Naive thymus-derived CD4-positive, alpha-beta T cell (primary cell): ENCODE measurements at regions of chr11 and their contacts with region 1.

Region 1: DNA sequence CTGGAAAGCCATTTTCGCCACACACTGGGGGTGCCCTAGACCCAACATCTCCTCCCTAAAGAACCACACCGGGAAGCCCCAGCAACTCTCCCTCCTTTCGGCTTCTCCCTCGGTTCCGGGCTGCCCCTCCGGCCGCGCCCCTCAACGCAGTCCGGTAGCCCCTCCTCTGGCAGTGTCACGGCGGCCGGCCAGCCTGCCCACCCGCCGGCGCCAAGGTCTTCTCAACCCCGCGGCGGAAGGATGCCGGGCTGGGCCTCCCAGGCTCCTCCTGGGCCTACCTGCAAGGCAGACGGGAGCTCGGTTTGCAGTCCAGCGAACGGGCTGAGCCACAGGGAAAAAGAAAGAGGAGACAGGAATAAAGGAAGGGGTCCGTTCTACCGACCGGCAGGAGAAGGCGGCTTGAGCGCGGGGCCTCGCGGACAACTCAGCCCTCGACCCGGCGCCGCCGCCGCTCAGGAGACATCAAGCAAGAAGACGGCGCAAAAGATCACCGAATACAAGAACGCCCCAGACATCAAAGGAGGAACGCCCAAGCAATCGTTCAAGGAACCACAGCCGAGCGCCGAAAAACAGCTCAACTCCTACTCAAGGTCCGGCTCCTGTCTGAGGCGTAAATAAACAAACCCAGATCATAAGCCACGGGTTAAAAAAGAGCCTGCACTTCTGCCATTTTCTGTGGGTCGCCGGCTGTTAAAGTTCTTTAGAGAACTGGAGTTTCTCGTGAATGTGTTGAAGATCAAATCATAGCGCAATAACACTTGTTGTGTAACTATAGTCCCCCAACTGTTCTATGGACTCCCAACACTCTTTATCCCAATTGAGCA is at the start of gene AMBRA1:
- DNase-seq: peak; percentile 59 to 83 (median 80)
- ATAC-seq: peak; percentile 97
- H3K4me3 ChIP-seq: peak within 1 kb of the TSS; percentile 69
- H3K4me3 Mint-ChIP-seq: peak within 1 kb of the TSS; percentile 90 to 100 (median 97)
- H3K27ac ChIP-seq: peak within 1 kb of the TSS; percentile 84
- H3K27ac Mint-ChIP-seq: peak within 1 kb of the TSS; percentile 92 to 98 (median 96)
- H3K4me1 ChIP-seq: peaks cover 19 to 22% of the 10 kb centered on the region in 2 donors
- H3K4me1 Mint-ChIP-seq: peaks cover 23 to 49% (median 41%) of the 10 kb centered on the region in 7 donors
- H3K27me3 ChIP-seq: no peaks in the 10 kb centered on the region
- H3K27me3 Mint-ChIP-seq: no peaks in the 10 kb centered on the region
- total RNA-seq, gene AMBRA1: 38.1 to 48.7 (median 44.6) TPM

Region 2: GRCh38 chr11:46450846-46451477 is 142.8 kb before region 1 on chr11:
- CTCF ChIA-PET with region 1: no interaction called
- POLR2A ChIA-PET with region 1: no interaction called
- intact Hi-C with region 1: no loop called
- DNase-seq: no peak
- ATAC-seq: no peak
- H3K4me3 ChIP-seq: no peak overlapping the region
- H3K4me3 Mint-ChIP-seq: no peak overlapping the region
- H3K27ac ChIP-seq: no peak overlapping the region
- H3K27ac Mint-ChIP-seq: peak overlapping the region in 1 of 9 donors; percentile 28
- H3K4me1 ChIP-seq: no peaks in the 10 kb centered on the region
- H3K4me1 Mint-ChIP-seq: peaks cover 4 to 66% (median 28%) of the 10 kb centered on the region in 7 donors
- H3K27me3 ChIP-seq: no peaks in the 10 kb centered on the region
- H3K27me3 Mint-ChIP-seq: no peaks in the 10 kb centered on the region

Region 3: GRCh38 chr11:46489661-46490560 is 103.9 kb before region 1 on chr11:
- CTCF ChIA-PET with region 1: no interaction called
- POLR2A ChIA-PET with region 1: no interaction called
- intact Hi-C with region 1: no loop called
- DNase-seq: peak in 7 of 9 donors; percentile 10 to 48 (median 27)
- ATAC-seq: peak; percentile 73
- H3K4me3 ChIP-seq: no peak overlapping the region
- H3K4me3 Mint-ChIP-seq: no peak overlapping the region
- H3K27ac ChIP-seq: no peak overlapping the region
- H3K27ac Mint-ChIP-seq: peak overlapping the region in 2 of 9 donors; percentile 32 to 66
- H3K4me1 ChIP-seq: no peaks in the 10 kb centered on the region
- H3K4me1 Mint-ChIP-seq: peaks cover 0 to 21% (median 8%) of the 10 kb centered on the region in 7 donors
- H3K27me3 ChIP-seq: no peaks in the 10 kb centered on the region
- H3K27me3 Mint-ChIP-seq: no peaks in the 10 kb centered on the region

Region 4: DNA sequence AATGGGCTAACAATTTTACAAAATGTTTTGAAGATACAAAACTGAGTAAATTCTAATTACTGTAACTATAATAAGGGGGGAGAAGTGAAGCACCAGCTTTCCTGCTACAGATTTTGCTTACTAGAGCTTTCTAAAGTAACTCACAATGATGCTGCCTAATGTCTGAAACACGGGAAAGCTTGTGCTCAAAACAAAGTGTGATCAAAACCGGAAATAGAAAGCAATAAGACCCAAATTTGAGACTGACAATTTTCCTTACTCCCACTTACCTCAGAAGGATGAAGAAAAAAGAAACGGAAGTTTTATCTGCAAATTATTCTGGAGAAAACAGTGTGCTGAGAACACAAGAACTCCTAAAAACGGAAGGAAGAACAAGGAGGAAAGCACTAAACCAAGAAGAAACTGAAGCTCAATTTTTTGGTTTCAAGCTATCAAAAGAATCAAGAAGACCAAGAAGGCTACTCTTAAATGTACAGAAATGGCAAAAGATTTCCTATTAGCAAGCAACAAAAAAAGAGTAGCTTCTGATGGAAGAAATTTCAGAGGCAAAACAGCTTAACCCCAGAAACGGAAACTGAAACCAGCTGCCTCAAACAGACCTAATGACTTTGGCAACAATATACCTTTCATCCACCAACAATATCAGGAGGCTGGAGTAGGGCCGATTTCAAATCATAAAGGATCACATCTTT is 33.3 kb before region 1 on chr11:
- CTCF ChIA-PET with region 1: no interaction called
- POLR2A ChIA-PET with region 1: interaction called, 3 read pairs
- intact Hi-C with region 1: loop called (anchors 2 kb)
- DNase-seq: peak in 7 of 9 donors; percentile 9 to 50 (median 33)
- ATAC-seq: peak; percentile 76
- H3K4me3 ChIP-seq: peak overlapping the region; percentile 57
- H3K4me3 Mint-ChIP-seq: peak overlapping the region; percentile 81 to 92 (median 88)
- H3K27ac ChIP-seq: peak overlapping the region; percentile 73
- H3K27ac Mint-ChIP-seq: peak overlapping the region; percentile 89 to 97 (median 94)
- H3K4me1 ChIP-seq: peaks cover 18 to 23% of the 10 kb centered on the region in 2 donors
- H3K4me1 Mint-ChIP-seq: peaks cover 33 to 80% (median 70%) of the 10 kb centered on the region in 7 donors
- H3K27me3 ChIP-seq: no peaks in the 10 kb centered on the region
- H3K27me3 Mint-ChIP-seq: no peaks in the 10 kb centered on the region

Region 5: DNA sequence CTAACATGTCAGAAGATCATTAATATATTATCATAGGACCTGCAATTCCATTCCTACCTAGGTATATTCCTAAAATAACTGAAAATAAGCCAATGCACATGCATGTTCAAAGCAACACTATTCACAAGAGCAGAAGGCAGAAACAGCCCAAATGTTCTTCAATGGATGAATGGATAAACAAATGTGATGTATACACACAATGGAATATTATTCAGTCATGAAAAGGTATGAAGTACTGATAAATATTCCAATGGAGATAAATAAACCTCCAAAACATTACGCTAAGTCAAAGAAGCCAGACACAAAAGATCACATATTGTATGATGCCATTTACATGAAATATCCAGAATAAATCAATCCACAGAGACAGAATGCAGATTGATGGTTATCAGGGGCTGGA is 16.7 kb before region 1 on chr11:
- CTCF ChIA-PET with region 1: no interaction called
- POLR2A ChIA-PET with region 1: no interaction called
- intact Hi-C with region 1: no loop called
- DNase-seq: no peak
- ATAC-seq: no peak
- H3K4me3 ChIP-seq: no peak overlapping the region
- H3K4me3 Mint-ChIP-seq: no peak overlapping the region
- H3K27ac ChIP-seq: no peak overlapping the region
- H3K27ac Mint-ChIP-seq: no peak overlapping the region
- H3K4me1 ChIP-seq: no peaks in the 10 kb centered on the region
- H3K4me1 Mint-ChIP-seq: peaks cover 22 to 56% (median 38%) of the 10 kb centered on the region in 7 donors
- H3K27me3 ChIP-seq: no peaks in the 10 kb centered on the region
- H3K27me3 Mint-ChIP-seq: no peaks in the 10 kb centered on the region